Panc1 (cell line): ENCODE measurements at regions of chr12 and their contacts with region 1.

Region 1: DNA sequence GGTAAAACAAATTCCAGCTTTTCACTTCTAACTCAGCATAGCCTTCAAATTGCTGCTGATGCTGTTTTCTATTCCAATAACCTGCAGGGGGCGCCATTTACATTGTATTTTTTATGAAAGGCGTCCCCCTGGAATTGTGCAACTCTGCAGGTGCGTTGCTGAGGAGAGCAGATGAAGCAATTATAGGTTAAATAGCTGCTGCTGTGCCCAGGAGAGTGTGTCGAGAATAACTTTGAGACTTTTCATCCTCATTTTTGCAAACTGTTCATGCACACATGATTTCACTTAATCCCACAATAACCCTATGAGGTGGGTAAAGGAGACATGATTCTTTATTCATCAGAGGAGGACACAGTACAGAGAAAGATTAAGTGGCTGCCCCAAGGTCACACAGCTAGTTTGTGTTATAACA is 75.7 kb downstream of the MYRFL start:
- DNase-seq: no peak
- ATAC-seq: peak; percentile 81; the same call in 1 of the 2 replicates
- H3K4me3 ChIP-seq: no peak overlapping the region
- H3K27ac ChIP-seq: no peak overlapping the region
- H3K4me1 ChIP-seq: no peaks in the 10 kb centered on the region
- H3K27me3 ChIP-seq: no peaks in the 10 kb centered on the region
- CTCF ChIP-seq: peak; percentile 85

Region 2: DNA sequence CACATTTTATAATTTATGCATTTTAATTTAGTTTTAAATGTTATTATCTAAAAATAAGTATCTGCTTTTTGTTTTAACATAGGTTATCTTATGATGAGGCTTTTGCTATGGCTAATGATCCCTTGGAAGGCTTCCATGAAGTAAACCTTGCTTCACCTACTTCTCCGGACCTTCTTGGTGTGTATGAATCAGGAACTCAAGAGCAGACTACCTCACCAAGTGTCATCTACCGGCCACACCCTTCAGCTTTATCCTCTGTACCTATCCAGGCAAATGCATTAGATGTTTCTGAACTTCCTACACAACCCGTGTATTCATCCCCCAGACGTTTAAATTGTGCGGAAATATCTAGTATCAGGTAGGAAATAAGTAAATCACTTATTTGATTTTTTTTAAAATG is 145.4 kb before region 1 on chr12:
- CTCF ChIA-PET with region 1: no interaction called
- POLR2A ChIA-PET with region 1: no interaction called
- in situ Hi-C with region 1: no loop called
- intact Hi-C with region 1: no loop called
- DNase-seq: no peak
- ATAC-seq: no peak
- H3K4me3 ChIP-seq: no peak overlapping the region
- H3K27ac ChIP-seq: no peak overlapping the region
- H3K4me1 ChIP-seq: no peaks in the 10 kb centered on the region
- H3K27me3 ChIP-seq: no peaks in the 10 kb centered on the region
- CTCF ChIP-seq: no peak

Region 3: GRCh38 chr12:69792533-69792932 is 108.2 kb before region 1 on chr12:
- CTCF ChIA-PET with region 1: no interaction called
- POLR2A ChIA-PET with region 1: no interaction called
- in situ Hi-C with region 1: no loop called
- intact Hi-C with region 1: no loop called
- DNase-seq: no peak
- ATAC-seq: no peak
- H3K4me3 ChIP-seq: no peak overlapping the region
- H3K27ac ChIP-seq: no peak overlapping the region
- H3K4me1 ChIP-seq: no peaks in the 10 kb centered on the region
- H3K27me3 ChIP-seq: no peaks in the 10 kb centered on the region
- CTCF ChIP-seq: no peak

Region 4: GRCh38 chr12:70242695-70243509 is 342.2 kb after region 1 on chr12 and contains the start of gene CNOT2:
- CTCF ChIA-PET with region 1: no interaction called
- POLR2A ChIA-PET with region 1: no interaction called
- in situ Hi-C with region 1: no loop called
- intact Hi-C with region 1: loop called (anchors 10 kb)
- DNase-seq: peak; percentile 51
- ATAC-seq: peak; percentile 94
- H3K4me3 ChIP-seq: peak within 1 kb of the TSS; percentile 93 to 98
- H3K27ac ChIP-seq: peak within 1 kb of the TSS; percentile 96
- H3K4me1 ChIP-seq: peaks cover 31% of the 10 kb centered on the region
- H3K27me3 ChIP-seq: no peaks in the 10 kb centered on the region
- CTCF ChIP-seq: no peak
- total RNA-seq, gene CNOT2: 49.3 TPM

Region 5: DNA sequence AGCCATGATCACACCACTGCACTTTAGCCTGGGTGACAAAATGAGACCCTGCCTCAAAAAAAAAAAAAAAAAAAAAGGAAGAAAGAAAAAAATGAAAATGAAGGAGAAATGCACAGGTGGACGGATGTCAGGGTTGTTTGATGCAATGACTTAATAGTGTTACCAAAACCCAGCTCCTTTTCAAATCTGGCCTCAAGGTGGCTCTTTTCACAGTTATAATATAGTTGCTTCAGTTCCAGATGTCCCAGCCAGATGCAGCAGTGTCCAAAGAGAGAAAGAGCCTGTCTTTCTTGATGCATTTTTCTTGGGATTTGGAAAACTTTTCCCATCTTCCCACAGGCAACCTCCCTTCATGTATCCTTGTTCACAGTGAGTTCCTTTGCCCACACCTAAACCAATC is 501.9 kb after region 1 on chr12:
- CTCF ChIA-PET with region 1: interaction called, 10 read pairs
- POLR2A ChIA-PET with region 1: no interaction called
- in situ Hi-C with region 1: no loop called
- intact Hi-C with region 1: no loop called
- DNase-seq: no peak
- ATAC-seq: no peak
- H3K4me3 ChIP-seq: no peak overlapping the region
- H3K27ac ChIP-seq: no peak overlapping the region
- H3K4me1 ChIP-seq: no peaks in the 10 kb centered on the region
- H3K27me3 ChIP-seq: no peaks in the 10 kb centered on the region
- CTCF ChIP-seq: no peak